ENCODE measurements at regions of chr17 and their contacts with region 1.

Region 1: GRCh38 chr17:70552230-70552981 is 383.1 kb downstream of the KCNJ2 start:
- DNase-seq: no peak
- ATAC-seq: peak; percentile 68

Region 2: DNA sequence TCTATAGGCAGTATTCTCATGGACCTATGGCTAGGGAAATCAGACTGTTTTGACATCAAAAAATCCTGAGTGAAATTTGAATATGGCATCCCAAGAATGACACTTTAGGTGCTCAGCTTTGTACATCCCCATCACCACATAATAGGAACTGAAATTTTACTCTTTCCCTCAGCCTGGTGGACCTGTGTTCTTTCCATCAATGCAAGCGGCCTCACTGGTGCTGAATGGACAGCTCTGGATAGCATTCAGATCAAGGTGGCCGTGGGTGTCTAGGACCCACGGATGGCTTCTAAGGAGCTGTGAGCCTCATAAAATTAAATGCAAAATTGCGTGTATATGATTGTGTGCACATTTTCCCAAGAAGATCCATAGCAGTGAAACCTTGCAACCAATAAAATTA is 985.3 kb before region 1 on chr17:
- intact Hi-C with region 1: loop called in 1 of 2 experiments (anchors 5 kb)
- DNase-seq: no peak
- ATAC-seq: no peak

Region 3: DNA sequence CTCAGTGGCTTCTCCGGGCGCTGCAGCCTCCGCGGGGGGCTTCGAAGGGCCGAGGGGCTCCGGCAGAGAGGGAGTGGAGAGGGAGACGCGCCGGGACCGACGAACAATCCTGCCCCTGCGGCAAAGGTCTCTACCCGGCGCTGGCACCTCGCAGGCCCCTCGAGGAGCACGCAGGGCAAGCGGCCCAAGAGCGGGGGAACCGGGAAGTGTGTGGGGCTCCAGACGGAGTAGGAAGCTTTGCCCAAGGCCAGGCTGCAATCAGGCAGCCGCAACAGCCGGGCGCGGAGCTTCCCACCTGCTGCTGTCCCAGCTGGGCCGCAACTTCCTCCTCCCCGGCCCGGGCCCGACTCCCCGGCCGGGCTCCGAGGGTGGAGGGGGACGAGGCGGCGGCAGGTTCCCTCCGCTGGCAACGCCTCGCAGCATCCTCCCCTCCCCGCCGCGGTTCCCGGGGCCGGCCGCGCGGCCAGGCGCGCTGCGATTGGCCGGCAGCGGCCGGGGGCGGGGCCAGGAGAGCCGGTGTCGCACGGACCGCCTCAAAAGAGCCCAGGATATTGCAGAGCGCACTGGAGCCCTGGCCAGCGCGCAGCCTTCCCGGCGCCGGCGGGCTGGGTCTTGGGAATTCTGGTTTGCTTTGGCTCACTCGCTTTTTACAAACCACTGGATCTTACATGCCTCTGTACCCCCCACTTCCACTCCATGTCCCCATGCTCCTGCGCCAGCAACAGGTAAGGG is 383.3 kb before region 1 on chr17 and contains the start of gene KCNJ2:
- intact Hi-C with region 1: loop called in 1 of 2 experiments (anchors 10 kb)
- DNase-seq: peak; percentile 88 to 90
- ATAC-seq: peak; percentile 88
- total RNA-seq, gene KCNJ2: 17.6 to 25.8 TPM

Region 4: DNA sequence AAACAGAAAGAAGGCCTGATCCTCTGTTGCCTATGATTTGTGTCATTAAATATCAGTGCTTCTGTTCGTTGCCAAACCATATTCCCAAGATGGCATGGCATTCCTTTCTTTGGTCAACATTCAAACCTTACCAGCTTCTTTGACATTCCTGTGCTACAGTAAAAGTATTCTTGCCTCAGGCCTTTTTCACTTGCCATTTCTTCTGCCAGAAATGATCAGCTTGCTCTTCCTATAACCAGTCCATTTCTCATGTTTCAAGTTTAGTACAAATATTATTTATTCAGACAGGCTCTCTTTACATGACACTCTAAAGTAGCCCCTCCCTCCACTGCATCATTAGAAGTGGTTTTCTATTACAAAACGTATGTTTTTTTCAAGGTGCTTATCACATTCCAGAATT is 104.8 kb before region 1 on chr17:
- intact Hi-C with region 1: no loop called
- DNase-seq: no peak
- ATAC-seq: no peak

Measured in left colon (tissue), 2 donors.